ENCODE measurements at regions of chr7 and their contacts with region 1.

Region 1: DNA sequence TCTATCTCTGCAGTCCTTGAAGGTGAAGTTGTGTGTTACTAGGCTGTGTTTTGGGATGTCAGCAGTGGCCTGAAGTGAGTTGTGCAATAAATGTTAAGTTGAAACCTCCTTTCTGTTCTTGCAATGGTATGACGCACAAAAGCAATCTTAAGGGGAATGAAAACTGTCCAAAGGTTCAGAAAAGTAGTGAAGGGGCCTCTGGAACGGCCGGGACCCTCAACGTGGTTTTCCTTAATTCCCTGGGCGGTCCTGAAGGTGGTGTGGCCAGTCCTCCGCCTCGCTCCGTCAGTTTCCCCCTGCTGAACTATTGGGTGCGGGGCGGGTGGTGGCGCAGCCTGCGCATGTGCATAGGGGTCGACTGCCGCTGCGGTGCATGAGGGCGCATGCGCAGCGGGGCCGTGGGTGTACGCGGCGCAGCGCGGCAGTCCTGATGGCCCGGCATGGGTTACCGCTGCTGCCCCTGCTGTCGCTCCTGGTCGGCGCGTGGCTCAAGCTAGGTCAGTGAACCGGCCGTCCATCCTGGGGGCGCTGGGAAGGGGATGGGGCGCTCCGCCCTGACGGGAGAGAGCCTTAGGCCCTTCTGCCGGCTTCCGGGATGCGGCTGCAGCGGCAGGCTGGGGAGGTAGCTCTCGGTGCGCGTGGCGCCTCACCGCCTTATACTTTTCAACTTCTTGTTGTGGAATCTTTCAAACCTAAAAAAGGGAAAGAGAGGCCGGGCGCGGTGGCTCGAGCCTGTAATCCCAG is at the start of gene SUMF2:
- DNase-seq: peak; percentile 94
- H3K4me3 ChIP-seq: peak within 1 kb of the TSS; percentile 14 to 75 (median 60)
- H3K27ac ChIP-seq: peak within 1 kb of the TSS; percentile 21
- H3K4me1 ChIP-seq: peaks cover 37% of the 10 kb centered on the region
- H3K27me3 ChIP-seq: no peaks in the 10 kb centered on the region
- CTCF ChIP-seq: peak; percentile 4 to 39
- POLR2A ChIP-seq: peak; percentile 97
- total RNA-seq, gene SUMF2: 107 and 110 TPM in 2 replicates

Region 2: GRCh38 chr7:55415173-55415778 is 648.8 kb before region 1 on chr7:
- CTCF ChIA-PET with region 1: no interaction called
- POLR2A ChIA-PET with region 1: no interaction called
- dilution Hi-C with region 1: no loop called
- intact Hi-C with region 1: no loop called
- DNase-seq: peak; percentile 84
- H3K4me3 ChIP-seq: no peak overlapping the region
- H3K27ac ChIP-seq: no peak overlapping the region
- H3K4me1 ChIP-seq: peaks cover 1% of the 10 kb centered on the region
- H3K27me3 ChIP-seq: no peaks in the 10 kb centered on the region
- CTCF ChIP-seq: peak; percentile 72 to 74
- POLR2A ChIP-seq: no peak

Region 3: DNA sequence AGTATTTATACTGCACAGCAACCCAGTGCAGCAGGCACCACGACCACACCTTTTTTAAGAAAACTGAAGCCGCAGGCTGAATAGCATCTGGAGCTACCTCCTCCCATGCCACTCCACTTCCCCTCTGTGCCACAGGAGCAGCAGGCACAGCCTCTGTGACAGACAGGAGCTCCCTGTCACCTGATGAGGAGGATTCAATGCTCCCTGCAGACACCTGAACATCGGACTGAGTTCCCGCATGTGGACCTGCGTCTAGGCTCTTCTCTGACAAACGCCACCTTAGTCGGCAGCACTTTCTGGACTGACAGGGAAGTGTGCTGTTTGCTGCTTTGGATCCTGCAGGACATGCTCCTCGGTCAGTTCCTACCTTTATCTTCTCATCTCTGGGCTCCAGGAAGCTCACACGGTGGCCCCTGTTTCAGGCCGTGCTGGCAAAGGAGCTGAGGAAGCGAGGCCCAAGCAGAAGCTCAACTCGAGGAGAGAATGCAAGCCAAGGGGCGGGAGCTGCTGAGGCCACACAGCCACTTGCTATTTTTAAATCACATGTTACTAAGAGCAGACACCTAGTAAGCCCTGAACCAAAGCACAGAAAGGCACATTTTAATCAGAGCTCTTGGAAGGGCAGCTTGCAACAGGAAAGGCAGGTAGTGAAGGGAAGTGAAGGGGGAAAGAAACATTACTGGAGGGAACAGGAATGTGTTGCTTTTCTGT is 548.3 kb before region 1 on chr7:
- CTCF ChIA-PET with region 1: no interaction called
- POLR2A ChIA-PET with region 1: no interaction called
- dilution Hi-C with region 1: no loop called
- intact Hi-C with region 1: no loop called
- DNase-seq: no peak
- H3K4me3 ChIP-seq: no peak overlapping the region
- H3K27ac ChIP-seq: no peak overlapping the region
- H3K4me1 ChIP-seq: no peaks in the 10 kb centered on the region
- H3K27me3 ChIP-seq: no peaks in the 10 kb centered on the region
- CTCF ChIP-seq: no peak
- POLR2A ChIP-seq: no peak

Region 4: GRCh38 chr7:56003749-56004148 is 60.3 kb before region 1 on chr7:
- CTCF ChIA-PET with region 1: interaction called, 26 read pairs
- POLR2A ChIA-PET with region 1: no interaction called
- dilution Hi-C with region 1: no loop called
- intact Hi-C with region 1: loop called (anchors 2 kb)
- DNase-seq: no peak
- H3K4me3 ChIP-seq: no peak overlapping the region
- H3K27ac ChIP-seq: no peak overlapping the region
- H3K4me1 ChIP-seq: peaks cover 4% of the 10 kb centered on the region
- H3K27me3 ChIP-seq: no peaks in the 10 kb centered on the region
- CTCF ChIP-seq: no peak
- POLR2A ChIP-seq: no peak

Region 5: DNA sequence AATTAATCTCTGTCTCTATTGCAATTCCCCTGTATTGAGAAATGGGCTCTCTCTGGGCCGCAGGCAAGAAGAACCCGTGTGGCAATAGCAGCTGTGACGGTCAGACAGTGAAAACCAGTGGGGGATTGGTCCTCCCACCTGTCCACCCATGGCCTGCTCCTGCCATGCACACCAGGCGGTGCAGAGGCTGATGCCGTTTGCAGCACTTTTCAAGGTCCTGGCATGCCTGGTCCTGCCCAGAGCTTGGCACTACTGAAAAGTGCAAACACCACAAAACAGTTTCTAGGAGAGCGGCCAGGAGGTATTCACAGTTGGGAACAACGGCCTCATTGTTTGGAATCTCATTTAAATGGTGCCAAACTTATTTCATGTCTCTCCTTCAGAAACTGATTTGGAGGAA is 54.4 kb before region 1 on chr7:
- CTCF ChIA-PET with region 1: interaction called, 26 read pairs
- POLR2A ChIA-PET with region 1: interaction called, 7 read pairs
- dilution Hi-C with region 1: no loop called
- intact Hi-C with region 1: loop called (anchors 2 kb)
- DNase-seq: no peak
- H3K4me3 ChIP-seq: no peak overlapping the region
- H3K27ac ChIP-seq: no peak overlapping the region
- H3K4me1 ChIP-seq: no peaks in the 10 kb centered on the region
- H3K27me3 ChIP-seq: no peaks in the 10 kb centered on the region
- CTCF ChIP-seq: no peak
- POLR2A ChIP-seq: no peak

Region 6: GRCh38 chr7:56033671-56034432 is 30.2 kb before region 1 on chr7:
- CTCF ChIA-PET with region 1: interaction called, 9 read pairs
- POLR2A ChIA-PET with region 1: interaction called, 7 read pairs
- dilution Hi-C with region 1: no loop called
- intact Hi-C with region 1: loop called (anchors 1 kb)
- DNase-seq: peak; percentile 83
- H3K4me3 ChIP-seq: peak overlapping the region; percentile 61 to 88 (median 76)
- H3K27ac ChIP-seq: no peak overlapping the region
- H3K4me1 ChIP-seq: peaks cover 5% of the 10 kb centered on the region
- H3K27me3 ChIP-seq: no peaks in the 10 kb centered on the region
- CTCF ChIP-seq: peak in 1 of 2 donors; percentile 49
- POLR2A ChIP-seq: peak; percentile 38

Region 7: DNA sequence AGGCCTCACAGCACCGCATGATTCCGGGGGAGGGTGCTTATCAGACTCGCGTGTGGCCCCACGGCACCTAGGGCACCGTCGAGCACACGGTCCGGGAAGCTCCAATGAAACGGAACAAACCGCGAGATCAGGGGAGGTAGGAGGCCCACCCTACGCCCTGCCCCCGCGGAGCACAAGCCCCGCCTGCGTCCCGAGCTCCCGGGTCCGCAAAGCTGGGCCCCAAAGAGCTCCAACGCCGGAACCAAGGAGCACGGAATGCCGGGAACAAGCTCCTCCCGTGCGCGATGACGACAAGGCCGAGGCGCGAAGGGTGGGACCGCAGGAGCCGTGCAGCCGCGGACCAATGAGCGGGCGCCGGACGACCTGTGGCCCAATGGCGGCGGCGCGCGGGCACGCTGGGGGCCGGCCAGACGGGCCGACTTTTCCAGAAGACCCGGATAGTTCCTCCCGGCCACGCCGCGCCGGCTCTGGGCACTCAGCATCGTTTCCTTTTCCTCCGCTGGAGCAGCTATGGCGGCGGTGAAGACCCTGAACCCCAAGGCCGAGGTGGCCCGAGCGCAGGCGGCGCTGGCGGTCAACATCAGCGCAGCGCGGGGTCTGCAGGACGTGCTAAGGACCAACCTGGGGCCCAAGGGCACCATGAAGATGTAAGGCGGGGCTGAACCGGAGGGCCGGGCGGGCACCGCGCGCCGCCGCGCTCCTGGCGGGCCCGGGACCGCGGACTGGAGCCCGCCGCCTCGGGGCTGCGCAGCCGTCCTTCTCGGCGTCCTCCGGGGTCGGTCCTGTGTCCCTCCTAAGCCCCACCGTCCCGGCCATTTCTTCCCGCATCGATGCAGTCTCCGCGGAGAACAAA is 12.5 kb before region 1 on chr7 and contains the starts of genes CCT6A and PSPH:
- CTCF ChIA-PET with region 1: interaction called, 14 read pairs
- POLR2A ChIA-PET with region 1: interaction called, 27 read pairs
- dilution Hi-C with region 1: no loop called
- intact Hi-C with region 1: loop called (anchors 1 kb)
- DNase-seq: peak; percentile 99
- H3K4me3 ChIP-seq: peak within 1 kb of the TSS; percentile 86 to 99 (median 88)
- H3K27ac ChIP-seq: peak within 1 kb of the TSS; percentile 83
- H3K4me1 ChIP-seq: peaks cover 45% of the 10 kb centered on the region
- H3K27me3 ChIP-seq: no peaks in the 10 kb centered on the region
- CTCF ChIP-seq: no peak
- POLR2A ChIP-seq: peak; percentile 88
- total RNA-seq, gene CCT6A: 210 and 221 TPM in 2 replicates
- total RNA-seq, gene PSPH: 20.3 and 24.2 TPM in 2 replicates

Region 8: GRCh38 chr7:56079450-56080185 is 15.6 kb after region 1 on chr7:
- CTCF ChIA-PET with region 1: interaction called, 24 read pairs
- POLR2A ChIA-PET with region 1: interaction called, 13 read pairs
- dilution Hi-C with region 1: no loop called
- intact Hi-C with region 1: no loop called
- DNase-seq: peak; percentile 93
- H3K4me3 ChIP-seq: no peak overlapping the region
- H3K27ac ChIP-seq: peak overlapping the region; percentile 73
- H3K4me1 ChIP-seq: peaks cover 26% of the 10 kb centered on the region
- H3K27me3 ChIP-seq: no peaks in the 10 kb centered on the region
- CTCF ChIP-seq: peak; percentile 89 to 92
- POLR2A ChIP-seq: no peak

Region 9: DNA sequence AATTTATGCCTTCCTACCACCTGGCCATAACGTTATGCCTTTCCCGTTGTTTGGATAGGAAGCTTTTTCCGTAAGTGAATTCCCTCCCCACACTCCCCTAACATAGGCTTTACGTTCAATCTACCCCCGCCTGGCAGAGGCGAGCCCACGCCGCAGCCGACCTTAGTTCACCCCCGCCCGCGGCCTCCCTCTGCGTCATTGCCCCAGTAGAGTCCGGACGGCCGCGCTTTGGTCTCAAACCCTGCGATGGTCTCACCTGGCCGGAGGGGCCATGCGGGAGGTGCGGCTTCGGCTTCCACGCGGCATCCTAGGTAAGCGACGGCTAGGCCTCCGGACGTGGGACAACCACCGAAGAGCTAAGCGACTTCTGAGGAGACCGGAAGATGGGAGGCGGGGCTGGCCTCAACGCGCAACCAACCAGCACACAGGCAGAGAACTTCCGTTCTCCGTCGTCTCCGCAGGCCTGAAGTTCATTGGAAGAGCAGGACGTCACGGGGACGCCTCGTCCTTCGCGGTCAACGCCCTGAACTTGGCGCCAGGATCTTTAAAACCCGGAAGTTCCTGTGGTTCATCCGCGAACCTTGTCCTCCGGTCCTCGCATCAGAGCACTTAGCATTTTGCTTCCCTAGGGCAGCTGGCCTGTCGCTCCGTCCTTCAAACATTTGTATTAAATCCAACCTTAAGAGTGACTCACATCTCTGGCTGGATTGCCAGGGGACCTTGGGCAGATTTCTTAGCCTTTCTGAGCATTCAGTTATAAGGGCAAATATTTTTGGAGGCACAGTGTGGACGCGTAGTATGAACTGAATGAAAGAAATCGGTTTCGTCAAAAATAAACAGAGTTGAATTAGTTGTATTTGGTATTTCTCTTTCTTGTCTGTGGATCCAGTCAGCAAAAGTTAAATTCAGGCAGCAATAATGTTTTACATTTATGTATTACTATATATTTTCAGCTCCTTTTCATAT is 42.3 kb after region 1 on chr7 and contains the start of gene CHCHD2:
- CTCF ChIA-PET with region 1: no interaction called
- POLR2A ChIA-PET with region 1: no interaction called
- dilution Hi-C with region 1: no loop called
- intact Hi-C with region 1: loop called (anchors 1 kb)
- DNase-seq: peak; percentile 98
- H3K4me3 ChIP-seq: peak within 1 kb of the TSS; percentile 54 to 87 (median 86)
- H3K27ac ChIP-seq: peak within 1 kb of the TSS; percentile 77
- H3K4me1 ChIP-seq: peaks cover 4% of the 10 kb centered on the region
- H3K27me3 ChIP-seq: no peaks in the 10 kb centered on the region
- CTCF ChIP-seq: no peak
- POLR2A ChIP-seq: peak; percentile 70
- total RNA-seq, gene CHCHD2: 368 and 378 TPM in 2 replicates